AG04450 (cell line): ENCODE measurements at regions of chr1 and their contacts with region 1.

Region 1: GRCh38 chr1:17125756-17126237 is 6.5 kb upstream of the PADI2 start:
- DNase-seq: peak; percentile 61
- H3K4me3 ChIP-seq: no peak overlapping the region
- H3K27ac ChIP-seq: no peak overlapping the region
- H3K27me3 ChIP-seq: no peaks in the 10 kb centered on the region
- CTCF ChIP-seq: peak; percentile 97

Region 2: DNA sequence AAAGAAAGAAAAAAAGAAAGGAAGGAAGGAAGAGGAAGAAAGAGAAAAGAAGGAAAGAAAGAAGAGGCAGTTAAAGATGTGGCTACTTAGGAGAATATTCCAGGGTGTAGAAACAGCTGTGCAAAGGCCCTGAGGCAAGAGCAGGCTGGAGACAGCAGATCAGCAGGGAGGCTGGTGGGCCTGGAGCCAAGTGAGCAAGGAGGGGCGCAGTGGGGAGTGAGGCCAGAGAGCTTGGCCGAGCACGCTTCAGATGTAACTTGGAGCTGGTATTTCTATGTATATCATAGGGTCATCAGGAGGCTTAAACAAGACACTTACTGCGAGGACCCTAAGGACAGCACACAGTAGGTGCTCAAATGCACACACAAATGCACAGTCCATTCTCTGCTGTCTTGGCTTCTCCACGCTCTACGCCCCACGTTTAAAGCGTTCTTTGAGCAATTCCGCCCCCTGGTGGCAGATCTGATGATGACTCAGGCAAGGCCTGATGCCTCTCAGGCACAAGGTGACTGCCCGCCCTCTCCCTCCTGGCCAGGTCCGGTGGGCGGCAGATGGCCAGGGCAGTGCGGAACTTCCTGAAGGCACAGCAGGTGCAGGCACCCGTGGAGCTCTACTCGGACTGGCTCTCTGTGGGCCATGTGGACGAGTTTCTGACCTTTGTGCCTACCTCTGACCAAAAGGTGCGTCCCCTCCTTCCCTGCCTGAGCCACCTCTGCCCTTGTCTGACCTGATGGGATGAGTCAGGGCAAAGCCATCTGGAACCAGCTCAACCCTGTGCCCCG is 111.2 kb after region 1 on chr1:
- CTCF ChIA-PET with region 1: interaction called, 282 read pairs
- POLR2A ChIA-PET with region 1: interaction called, 5 read pairs
- DNase-seq: peak; percentile 55
- H3K4me3 ChIP-seq: no peak overlapping the region
- H3K27ac ChIP-seq: no peak overlapping the region
- H3K27me3 ChIP-seq: peaks cover 4% of the 10 kb centered on the region
- CTCF ChIP-seq: peak; percentile 81

Region 3: DNA sequence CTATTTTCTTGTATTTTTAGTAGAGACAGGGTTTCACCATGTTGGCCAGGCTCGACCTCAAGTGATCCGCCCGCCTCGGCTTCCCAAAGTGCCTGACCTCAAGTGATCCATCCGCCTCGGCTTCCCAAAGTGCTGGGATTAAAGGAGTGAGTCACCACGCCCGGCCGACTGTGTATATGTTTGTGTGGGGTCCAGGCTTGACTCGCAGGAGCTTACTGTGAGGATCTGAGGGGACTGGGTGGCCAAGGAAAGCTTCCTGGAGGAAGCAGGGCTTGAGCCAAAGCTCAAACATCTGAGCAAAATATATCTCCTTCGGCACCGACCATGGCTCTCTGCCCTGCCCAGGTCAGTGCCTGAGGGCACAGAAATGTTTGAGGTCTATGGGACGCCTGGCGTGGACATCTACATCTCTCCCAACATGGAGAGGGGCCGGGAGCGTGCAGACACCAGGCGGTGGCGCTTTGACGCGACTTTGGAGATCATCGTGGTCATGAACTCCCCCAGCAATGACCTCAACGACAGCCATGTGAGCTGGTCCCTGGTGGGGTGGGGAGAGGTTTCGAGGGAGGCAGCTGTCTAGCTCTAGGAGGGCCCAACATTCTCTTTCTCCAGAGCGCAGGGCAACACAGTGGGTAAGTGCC is 133.6 kb after region 1 on chr1:
- CTCF ChIA-PET with region 1: interaction called, 13 read pairs
- POLR2A ChIA-PET with region 1: no interaction called
- DNase-seq: no peak
- H3K4me3 ChIP-seq: no peak overlapping the region
- H3K27ac ChIP-seq: no peak overlapping the region
- H3K27me3 ChIP-seq: peaks cover 11% of the 10 kb centered on the region
- CTCF ChIP-seq: no peak

Region 4: GRCh38 chr1:17287130-17287776 is 161.5 kb after region 1 on chr1:
- CTCF ChIA-PET with region 1: interaction called, 13 read pairs
- POLR2A ChIA-PET with region 1: no interaction called
- DNase-seq: peak; percentile 47
- H3K4me3 ChIP-seq: no peak overlapping the region
- H3K27ac ChIP-seq: peak overlapping the region; percentile 1
- H3K27me3 ChIP-seq: peaks cover 32% of the 10 kb centered on the region
- CTCF ChIP-seq: no peak

Region 5: GRCh38 chr1:17527036-17527914 is 401.5 kb after region 1 on chr1:
- CTCF ChIA-PET with region 1: no interaction called
- POLR2A ChIA-PET with region 1: no interaction called
- DNase-seq: no peak
- H3K4me3 ChIP-seq: no peak overlapping the region
- H3K27ac ChIP-seq: no peak overlapping the region
- H3K27me3 ChIP-seq: peaks cover 12% of the 10 kb centered on the region
- CTCF ChIP-seq: no peak